ENCODE measurements at regions of chr6 and their contacts with region 1.

Region 1: DNA sequence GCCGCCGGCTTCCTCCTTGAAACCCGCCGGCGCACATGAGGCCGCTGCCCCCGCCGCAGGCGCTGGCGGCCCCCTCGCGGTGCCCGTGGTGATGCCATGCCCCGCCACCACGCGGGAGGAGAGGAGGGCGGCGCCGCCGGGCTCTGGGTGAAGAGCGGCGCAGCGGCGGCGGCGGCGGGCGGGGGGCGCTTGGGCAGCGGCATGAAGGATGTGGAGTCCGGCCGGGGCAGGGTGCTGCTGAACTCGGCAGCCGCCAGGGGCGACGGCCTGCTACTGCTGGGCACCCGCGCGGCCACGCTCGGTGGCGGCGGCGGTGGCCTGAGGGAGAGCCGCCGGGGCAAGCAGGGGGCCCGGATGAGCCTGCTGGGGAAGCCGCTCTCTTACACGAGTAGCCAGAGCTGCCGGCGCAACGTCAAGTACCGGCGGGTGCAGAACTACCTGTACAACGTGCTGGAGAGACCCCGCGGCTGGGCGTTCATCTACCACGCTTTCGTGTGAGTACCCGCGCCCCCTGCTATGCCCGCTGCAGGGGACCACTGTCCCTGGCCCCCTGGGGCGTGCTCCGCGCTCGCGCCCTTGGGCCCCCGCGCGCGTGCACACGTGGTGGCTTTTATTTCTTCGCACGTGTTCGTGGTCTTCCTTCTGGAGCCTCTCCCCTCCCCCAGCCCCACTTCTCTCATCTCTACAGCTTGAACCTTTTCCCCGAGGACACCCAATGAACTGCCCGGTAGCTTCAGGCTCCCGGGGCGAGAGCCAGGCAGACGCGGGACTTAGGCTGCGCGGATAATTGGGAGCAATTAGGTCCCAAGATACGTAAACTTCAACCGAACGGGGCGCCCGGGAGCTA is 453 bp downstream of the KCNQ5 start:
- DNase-seq: peak in 1 of 2 donors; percentile 54
- ATAC-seq: peak; percentile 46 to 53
- H3K4me3 ChIP-seq: peak overlapping the region; percentile 66 to 83 (median 76)
- H3K27ac ChIP-seq: peak overlapping the region; percentile 64 to 82 (median 80)
- H3K4me1 ChIP-seq: peaks cover 13 to 38% of the 10 kb centered on the region in 2 donors
- H3K27me3 ChIP-seq: no peaks in the 10 kb centered on the region
- CTCF ChIP-seq: peak in 4 of 5 experiments; percentile 23 to 42 (median 32)
- POLR2A ChIP-seq: peak in 1 of 2 donors; percentile 24

Region 2: GRCh38 chr6:72411872-72412708 is 210.2 kb before region 1 on chr6:
- in situ Hi-C with region 1: loop called in 1 of 4 experiments (anchors 25 kb)
- intact Hi-C with region 1: loop called (anchors 10 kb)
- DNase-seq: peak; percentile 34 to 63
- ATAC-seq: peak; percentile 79 to 82
- H3K4me3 ChIP-seq: no peak overlapping the region
- H3K27ac ChIP-seq: no peak overlapping the region
- H3K4me1 ChIP-seq: no peaks in the 10 kb centered on the region
- H3K27me3 ChIP-seq: no peaks in the 10 kb centered on the region
- CTCF ChIP-seq: peak in 4 of 5 experiments; percentile 98 to 100 (median 99)
- POLR2A ChIP-seq: no peak

Region 3: GRCh38 chr6:72787391-72788031 is 165.2 kb after region 1 on chr6:
- in situ Hi-C with region 1: no loop called
- intact Hi-C with region 1: loop called (anchors 1 kb)
- DNase-seq: peak; percentile 65 to 79
- ATAC-seq: peak; percentile 98 to 99
- H3K4me3 ChIP-seq: no peak overlapping the region
- H3K27ac ChIP-seq: peak overlapping the region; percentile 54 to 74 (median 62)
- H3K4me1 ChIP-seq: peaks cover 15 to 25% of the 10 kb centered on the region in 2 donors
- H3K27me3 ChIP-seq: no peaks in the 10 kb centered on the region
- CTCF ChIP-seq: no peak
- POLR2A ChIP-seq: no peak

Region 4: DNA sequence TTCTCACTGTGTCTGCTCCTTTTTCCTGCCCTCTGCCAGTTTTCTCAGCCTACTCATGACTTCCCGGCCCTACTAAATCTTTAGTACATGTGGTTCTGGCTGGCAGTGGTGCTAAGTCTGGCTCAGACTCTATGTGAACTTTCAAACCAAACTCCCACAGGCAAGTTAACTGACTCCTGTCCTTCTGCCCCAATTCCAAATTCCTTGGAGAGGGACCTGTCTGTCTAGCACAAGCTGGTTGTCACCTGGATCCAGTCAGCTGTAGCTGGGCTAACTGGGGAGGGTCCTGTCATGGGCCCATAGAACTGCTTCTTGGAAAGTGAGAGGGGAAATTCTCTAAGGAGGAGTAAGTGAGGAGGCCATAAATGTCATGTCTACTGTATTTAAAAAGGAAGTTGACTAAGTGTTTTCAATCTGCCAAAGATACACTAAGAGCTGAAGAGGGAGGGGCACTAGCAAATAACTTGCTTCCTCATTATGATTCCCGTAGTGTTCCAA is 239.7 kb after region 1 on chr6:
- in situ Hi-C with region 1: no loop called
- intact Hi-C with region 1: loop called (anchors 2 kb)
- DNase-seq: peak; percentile 71 to 81
- ATAC-seq: peak; percentile 86 to 89
- H3K4me3 ChIP-seq: no peak overlapping the region
- H3K27ac ChIP-seq: peak overlapping the region; percentile 75 to 89 (median 86)
- H3K4me1 ChIP-seq: peaks cover 48 to 61% of the 10 kb centered on the region in 2 donors
- H3K27me3 ChIP-seq: no peaks in the 10 kb centered on the region
- CTCF ChIP-seq: no peak
- POLR2A ChIP-seq: no peak

Region 5: GRCh38 chr6:73129653-73130443 is 507.5 kb after region 1 on chr6:
- in situ Hi-C with region 1: loop called (anchors 5 to 10 kb)
- intact Hi-C with region 1: no loop called
- DNase-seq: peak; percentile 61 to 75
- ATAC-seq: peak; percentile 63 to 85
- H3K4me3 ChIP-seq: peak overlapping the region in 2 of 4 donors; percentile 15 to 38
- H3K27ac ChIP-seq: no peak overlapping the region
- H3K4me1 ChIP-seq: no peaks in the 10 kb centered on the region
- H3K27me3 ChIP-seq: no peaks in the 10 kb centered on the region
- CTCF ChIP-seq: peak; percentile 90 to 94 (median 91)
- POLR2A ChIP-seq: no peak

Measured in gastrocnemius medialis (tissue), 4 donors.